Panc1 (cell line): ENCODE measurements at regions of chr19 and their contacts with region 1.

Region 1: DNA sequence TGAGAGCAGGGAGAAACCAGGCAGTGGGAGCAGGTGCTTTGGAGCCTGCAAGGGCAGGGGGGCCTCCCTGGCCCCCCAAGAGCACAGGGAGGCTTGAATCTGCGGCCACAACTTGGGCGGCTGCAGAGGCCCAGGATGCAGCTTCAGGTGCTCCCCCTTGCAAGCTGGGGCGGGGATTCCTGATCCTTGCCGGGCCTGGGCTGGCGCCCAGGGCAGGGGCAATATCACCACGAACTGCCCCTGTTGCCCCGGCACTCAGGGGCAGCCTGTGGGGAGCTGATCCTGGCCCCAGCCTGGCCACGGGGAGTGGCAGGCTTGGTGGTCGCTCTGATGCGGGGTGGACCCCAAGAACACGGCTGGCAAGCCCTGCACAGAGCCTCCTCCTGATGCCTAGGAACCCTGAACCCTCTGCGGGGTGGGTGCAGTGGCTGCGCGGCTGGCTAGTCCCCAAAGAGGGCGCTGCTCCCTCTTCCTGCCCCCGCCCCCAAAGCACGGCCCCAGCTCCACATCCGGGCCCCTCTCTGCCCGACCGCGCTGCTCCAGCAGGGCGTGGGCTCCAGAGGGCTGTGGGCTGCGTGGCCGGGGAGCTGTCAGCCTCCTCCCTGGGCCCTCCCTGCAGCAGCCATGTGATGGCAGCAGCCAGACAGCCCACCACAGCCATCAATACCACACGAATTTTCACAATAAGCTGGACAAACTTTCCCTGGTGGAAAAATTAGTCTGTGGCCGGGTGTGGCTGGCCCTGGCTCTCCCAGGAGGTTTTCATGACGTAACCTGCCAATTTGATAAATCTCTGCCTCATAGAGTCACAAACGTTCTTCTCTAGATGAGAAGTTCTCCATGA is 21.0 kb downstream of the TNFSF9 start:
- DNase-seq: no peak
- ATAC-seq: no peak
- H3K4me3 ChIP-seq: no peak overlapping the region
- H3K27ac ChIP-seq: no peak overlapping the region
- H3K4me1 ChIP-seq: no peaks in the 10 kb centered on the region
- H3K27me3 ChIP-seq: no peaks in the 10 kb centered on the region
- CTCF ChIP-seq: no peak

Region 2: DNA sequence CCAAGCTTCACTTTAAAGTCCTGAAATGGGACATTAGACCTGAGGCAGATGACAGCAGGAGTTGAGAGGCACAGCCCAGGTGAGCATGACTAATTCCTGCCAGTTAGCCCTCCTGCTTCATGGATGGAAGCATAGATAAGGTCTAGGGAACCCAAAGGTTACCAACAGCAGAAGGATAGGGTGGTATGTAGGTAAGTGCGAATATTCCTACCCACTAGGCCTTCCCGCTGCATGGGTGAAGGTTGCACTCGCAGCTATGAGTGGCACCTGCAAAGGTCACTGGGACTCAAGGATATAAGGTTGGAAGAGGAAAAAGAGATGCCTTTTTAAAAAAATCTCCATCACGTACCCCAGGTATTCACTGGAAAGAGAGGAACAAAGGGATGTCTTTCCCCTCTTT is 259.8 kb before region 1 on chr19:
- CTCF ChIA-PET with region 1: no interaction called
- POLR2A ChIA-PET with region 1: no interaction called
- in situ Hi-C with region 1: no loop called
- intact Hi-C with region 1: no loop called
- DNase-seq: no peak
- ATAC-seq: no peak
- H3K4me3 ChIP-seq: no peak overlapping the region
- H3K27ac ChIP-seq: no peak overlapping the region
- H3K4me1 ChIP-seq: no peaks in the 10 kb centered on the region
- H3K27me3 ChIP-seq: no peaks in the 10 kb centered on the region
- CTCF ChIP-seq: no peak

Region 3: GRCh38 chr19:6540918-6541689 is 10.7 kb before region 1 on chr19:
- CTCF ChIA-PET with region 1: interaction called, 16 read pairs
- POLR2A ChIA-PET with region 1: no interaction called
- in situ Hi-C with region 1: no loop called
- intact Hi-C with region 1: no loop called
- DNase-seq: no peak
- ATAC-seq: no peak
- H3K4me3 ChIP-seq: no peak overlapping the region
- H3K27ac ChIP-seq: no peak overlapping the region
- H3K4me1 ChIP-seq: no peaks in the 10 kb centered on the region
- H3K27me3 ChIP-seq: no peaks in the 10 kb centered on the region
- CTCF ChIP-seq: no peak

Region 4: DNA sequence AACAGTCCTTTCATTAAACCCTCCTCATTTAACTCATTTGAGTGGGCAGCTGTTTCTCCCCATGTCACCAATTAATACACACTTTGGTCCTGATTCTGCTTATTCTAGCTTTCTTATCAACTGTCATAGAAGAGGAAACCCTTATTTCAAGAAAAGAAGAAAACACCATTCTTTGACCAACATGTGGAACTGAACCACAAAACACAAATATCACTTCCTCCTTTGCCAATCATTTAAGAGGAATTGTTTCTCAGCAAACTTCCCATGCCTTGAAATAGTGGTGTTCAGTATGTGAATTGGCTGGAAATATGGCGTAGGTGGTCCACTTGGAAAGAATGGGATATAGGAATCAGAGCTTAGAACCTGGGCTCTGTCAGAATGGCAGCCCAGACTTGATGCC is 449.0 kb after region 1 on chr19:
- CTCF ChIA-PET with region 1: interaction called, 13 read pairs
- POLR2A ChIA-PET with region 1: no interaction called
- in situ Hi-C with region 1: no loop called
- intact Hi-C with region 1: no loop called
- DNase-seq: no peak
- ATAC-seq: no peak
- H3K4me3 ChIP-seq: no peak overlapping the region
- H3K27ac ChIP-seq: no peak overlapping the region
- H3K4me1 ChIP-seq: no peaks in the 10 kb centered on the region
- H3K27me3 ChIP-seq: peaks cover 2% of the 10 kb centered on the region; the same call in 1 of the 2 replicates
- CTCF ChIP-seq: no peak